Stomach (tissue), 19 donors: ENCODE measurements at regions of chr20 and their contacts with region 1.

Region 1: GRCh38 chr20:18466894-18467730 is at the starts of genes DZANK1 and POLR3F:
- DNase-seq: peak; percentile 96 to 98
- H3K4me3 ChIP-seq: peak within 1 kb of the TSS; percentile 69 to 100 (median 88)
- H3K27ac ChIP-seq: peak within 1 kb of the TSS; percentile 82 to 93 (median 87)
- H3K4me1 ChIP-seq: peaks cover 6 to 28% (median 23%) of the 10 kb centered on the region in 4 donors
- H3K27me3 ChIP-seq: no peaks in the 10 kb centered on the region
- CTCF ChIP-seq: peak in 1 of 7 experiments; percentile 11
- EP300 ChIP-seq: no peak
- POLR2A ChIP-seq: no peak
- total RNA-seq, gene DZANK1: 1.4 to 24.6 (median 3.3) TPM in 4 of 5 donors, not detected in the other
- total RNA-seq, gene POLR3F: 5.4 to 24.3 (median 13.0) TPM in 4 of 5 donors, not detected in the other

Region 2: DNA sequence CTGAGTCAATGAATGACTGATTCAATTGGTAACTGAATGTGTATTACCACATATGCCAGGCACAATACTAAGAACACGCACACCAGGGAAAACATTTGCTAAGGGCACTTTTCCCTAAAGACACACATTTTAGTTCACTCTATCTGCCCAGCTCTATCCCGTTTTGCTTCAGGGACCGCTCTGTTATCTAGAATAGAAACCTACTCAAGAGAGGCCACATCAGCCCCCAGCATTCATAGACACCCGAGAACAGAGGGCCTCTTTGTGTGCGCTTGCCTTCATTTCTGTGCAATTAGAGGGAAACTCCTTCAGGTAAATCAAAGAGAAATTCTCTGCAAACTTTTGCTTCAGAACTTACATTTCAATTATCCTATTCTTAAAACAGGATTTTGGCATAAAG is 50.6 kb before region 1 on chr20:
- intact Hi-C with region 1: loop called (anchors 5 kb)
- DNase-seq: peak in 1 of 2 donors; percentile 28
- H3K4me3 ChIP-seq: no peak overlapping the region
- H3K27ac ChIP-seq: no peak overlapping the region
- H3K4me1 ChIP-seq: peaks cover 0 to 9% (median 0%) of the 10 kb centered on the region in 4 donors
- H3K27me3 ChIP-seq: no peaks in the 10 kb centered on the region
- CTCF ChIP-seq: no peak
- EP300 ChIP-seq: no peak
- POLR2A ChIP-seq: no peak